ENCODE measurements at regions of chr13 and their contacts with region 1.

Region 1: DNA sequence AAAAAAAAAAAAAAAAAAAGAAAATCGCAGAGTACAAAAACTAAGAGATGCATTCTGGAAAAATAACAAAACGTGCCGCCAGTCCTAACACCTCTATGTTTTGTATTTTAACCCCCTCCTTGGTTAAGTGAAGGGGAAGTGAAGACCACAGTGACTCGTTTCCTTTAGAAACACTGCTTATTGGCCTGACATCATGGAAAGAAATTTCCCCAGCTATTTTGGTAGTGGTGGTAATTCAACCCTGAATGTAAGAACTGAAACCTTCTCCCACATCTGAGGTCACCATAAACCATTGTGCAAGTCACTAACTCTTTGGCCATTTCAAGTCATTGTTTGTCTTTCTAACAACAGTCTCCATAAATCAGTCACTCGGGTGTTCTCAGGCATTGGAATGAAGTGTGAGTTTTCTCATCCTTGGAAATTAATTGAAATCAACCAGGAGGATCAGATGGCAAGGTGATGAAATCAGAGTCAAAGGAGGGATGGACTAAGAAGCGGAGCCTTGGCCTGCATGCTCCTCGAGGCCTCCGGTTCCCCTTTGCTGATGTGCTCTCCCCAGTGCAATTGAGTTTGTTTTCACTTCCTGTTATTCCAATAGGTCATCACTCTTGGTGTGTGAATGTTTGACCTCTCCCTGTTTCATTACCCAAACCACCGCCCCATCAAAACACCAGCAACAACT is 443.9 kb downstream of the FGF9 start:
- DNase-seq: peak; percentile 18
- H3K4me3 Mint-ChIP-seq: peak overlapping the region; percentile 3
- H3K27ac Mint-ChIP-seq: peak overlapping the region; percentile 79
- H3K4me1 Mint-ChIP-seq: peaks cover 51% of the 10 kb centered on the region
- H3K27me3 Mint-ChIP-seq: no peaks in the 10 kb centered on the region

Region 2: GRCh38 chr13:22091222-22091970 is 23.4 kb before region 1 on chr13:
- CTCF ChIA-PET with region 1: no interaction called
- POLR2A ChIA-PET with region 1: no interaction called
- intact Hi-C with region 1: no loop called
- DNase-seq: no peak
- H3K4me3 Mint-ChIP-seq: no peak overlapping the region
- H3K27ac Mint-ChIP-seq: no peak overlapping the region
- H3K4me1 Mint-ChIP-seq: no peaks in the 10 kb centered on the region
- H3K27me3 Mint-ChIP-seq: no peaks in the 10 kb centered on the region

Region 3: GRCh38 chr13:22126433-22127021 is 11.8 kb after region 1 on chr13:
- CTCF ChIA-PET with region 1: interaction called, 3 read pairs
- POLR2A ChIA-PET with region 1: no interaction called
- intact Hi-C with region 1: loop called (anchors 1 kb)
- DNase-seq: no peak
- H3K4me3 Mint-ChIP-seq: no peak overlapping the region
- H3K27ac Mint-ChIP-seq: no peak overlapping the region
- H3K4me1 Mint-ChIP-seq: peaks cover 34% of the 10 kb centered on the region
- H3K27me3 Mint-ChIP-seq: no peaks in the 10 kb centered on the region

Region 4: DNA sequence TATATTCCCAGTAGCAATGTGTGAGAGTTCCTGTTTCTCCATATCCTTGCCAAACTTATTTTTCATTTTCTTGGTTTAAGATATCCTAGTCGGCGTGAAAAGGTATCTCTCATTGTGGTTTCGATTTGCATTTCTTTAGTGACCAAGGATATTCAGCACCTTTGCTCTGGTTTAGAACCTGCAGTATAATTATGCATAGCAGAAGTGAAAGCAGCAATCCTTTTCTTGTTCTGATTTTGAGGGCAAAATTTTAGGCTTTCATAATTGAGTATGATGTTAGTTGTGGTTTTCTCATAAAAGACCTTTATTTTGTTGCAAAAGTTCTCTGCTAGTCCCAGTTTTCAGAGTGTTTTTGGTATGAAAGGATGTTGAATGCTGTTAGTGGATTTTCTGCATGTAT is 47.1 kb after region 1 on chr13:
- CTCF ChIA-PET with region 1: no interaction called
- POLR2A ChIA-PET with region 1: no interaction called
- intact Hi-C with region 1: loop called (anchors 1 kb)
- DNase-seq: no peak
- H3K4me3 Mint-ChIP-seq: peak overlapping the region; percentile 34
- H3K27ac Mint-ChIP-seq: no peak overlapping the region
- H3K4me1 Mint-ChIP-seq: peaks cover 39% of the 10 kb centered on the region
- H3K27me3 Mint-ChIP-seq: no peaks in the 10 kb centered on the region